ENCODE measurements at regions of chr5 and their contacts with region 1.

Region 1: GRCh38 chr5:68898951-68899471 is 194.8 kb upstream of the SLC30A5 start:
- DNase-seq: no peak
- ATAC-seq: no peak
- H3K4me3 ChIP-seq: no peak overlapping the region
- H3K4me3 Mint-ChIP-seq: no peak overlapping the region
- H3K27ac ChIP-seq: no peak overlapping the region
- H3K27ac Mint-ChIP-seq: no peak overlapping the region
- H3K4me1 ChIP-seq: peaks cover 9% of the 10 kb centered on the region
- H3K4me1 Mint-ChIP-seq: peaks cover 14% of the 10 kb centered on the region
- H3K27me3 ChIP-seq: no peaks in the 10 kb centered on the region
- H3K27me3 Mint-ChIP-seq: no peaks in the 10 kb centered on the region
- CTCF ChIP-seq: no peak

Region 2: DNA sequence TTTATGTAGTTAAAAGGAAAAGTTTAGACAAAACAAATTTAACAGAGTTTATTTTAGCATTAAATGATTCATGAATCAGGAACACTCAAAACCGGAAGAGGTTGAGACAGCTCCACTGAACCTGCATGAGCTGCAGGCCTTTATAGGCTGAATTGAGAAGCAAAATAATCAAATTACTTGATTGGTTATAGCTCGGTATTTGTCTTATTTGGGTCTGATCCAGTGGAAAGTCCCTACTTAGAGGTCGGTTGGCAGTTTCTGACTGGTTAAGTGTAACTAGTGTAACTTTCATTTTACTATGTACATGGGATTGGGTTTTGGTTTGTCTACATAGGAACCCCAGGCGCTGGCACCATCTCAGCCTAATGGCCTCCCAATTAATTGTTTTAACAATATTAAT is 757.5 kb before region 1 on chr5:
- CTCF ChIA-PET with region 1: no interaction called
- POLR2A ChIA-PET with region 1: no interaction called
- intact Hi-C with region 1: no loop called
- DNase-seq: peak in 2 of 9 experiments; percentile 61 to 71
- ATAC-seq: peak; percentile 88
- H3K4me3 ChIP-seq: no peak overlapping the region
- H3K4me3 Mint-ChIP-seq: no peak overlapping the region
- H3K27ac ChIP-seq: no peak overlapping the region
- H3K27ac Mint-ChIP-seq: no peak overlapping the region
- H3K4me1 ChIP-seq: no peaks in the 10 kb centered on the region
- H3K4me1 Mint-ChIP-seq: peaks cover 10% of the 10 kb centered on the region
- H3K27me3 ChIP-seq: no peaks in the 10 kb centered on the region
- H3K27me3 Mint-ChIP-seq: no peaks in the 10 kb centered on the region
- CTCF ChIP-seq: no peak

Region 3: DNA sequence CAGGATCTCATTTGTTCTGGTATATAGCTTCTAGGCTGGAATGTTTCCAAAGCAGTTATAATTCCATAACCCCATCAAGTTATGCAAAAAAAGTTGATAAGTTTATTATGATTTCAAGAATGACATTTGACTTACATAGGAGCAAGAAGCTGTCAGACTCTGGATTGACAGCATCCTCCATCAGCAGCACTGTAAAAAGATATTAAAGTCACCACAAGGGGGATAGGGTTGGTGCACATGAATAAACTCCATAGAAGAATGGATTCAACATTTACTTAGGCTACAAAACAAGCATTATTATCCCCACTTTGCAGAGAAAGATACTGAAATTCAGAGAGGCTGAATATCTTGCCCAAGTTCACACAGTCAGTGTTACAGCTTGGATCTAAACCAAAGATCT is 14.1 kb before region 1 on chr5:
- CTCF ChIA-PET with region 1: interaction called, 14 read pairs
- POLR2A ChIA-PET with region 1: interaction called, 7 read pairs
- intact Hi-C with region 1: no loop called
- DNase-seq: peak in 2 of 9 experiments; percentile 18 to 35
- ATAC-seq: no peak
- H3K4me3 ChIP-seq: no peak overlapping the region
- H3K4me3 Mint-ChIP-seq: no peak overlapping the region
- H3K27ac ChIP-seq: no peak overlapping the region
- H3K27ac Mint-ChIP-seq: no peak overlapping the region
- H3K4me1 ChIP-seq: peaks cover 18% of the 10 kb centered on the region
- H3K4me1 Mint-ChIP-seq: peaks cover 29% of the 10 kb centered on the region
- H3K27me3 ChIP-seq: no peaks in the 10 kb centered on the region
- H3K27me3 Mint-ChIP-seq: no peaks in the 10 kb centered on the region
- CTCF ChIP-seq: peak; percentile 43